ENCODE measurements at regions of chrX and their contacts with region 1.

Region 1: GRCh38 chrX:49043220-49043986 is at the start of gene TFE3:
- DNase-seq: peak; percentile 97
- H3K4me3 Mint-ChIP-seq: peak within 1 kb of the TSS; percentile 91
- H3K27ac Mint-ChIP-seq: peak within 1 kb of the TSS; percentile 92
- H3K4me1 Mint-ChIP-seq: peaks cover 30% of the 10 kb centered on the region
- H3K27me3 Mint-ChIP-seq: no peaks in the 10 kb centered on the region
- total RNA-seq, gene TFE3: 29.0 to 29.1 TPM

Region 2: DNA sequence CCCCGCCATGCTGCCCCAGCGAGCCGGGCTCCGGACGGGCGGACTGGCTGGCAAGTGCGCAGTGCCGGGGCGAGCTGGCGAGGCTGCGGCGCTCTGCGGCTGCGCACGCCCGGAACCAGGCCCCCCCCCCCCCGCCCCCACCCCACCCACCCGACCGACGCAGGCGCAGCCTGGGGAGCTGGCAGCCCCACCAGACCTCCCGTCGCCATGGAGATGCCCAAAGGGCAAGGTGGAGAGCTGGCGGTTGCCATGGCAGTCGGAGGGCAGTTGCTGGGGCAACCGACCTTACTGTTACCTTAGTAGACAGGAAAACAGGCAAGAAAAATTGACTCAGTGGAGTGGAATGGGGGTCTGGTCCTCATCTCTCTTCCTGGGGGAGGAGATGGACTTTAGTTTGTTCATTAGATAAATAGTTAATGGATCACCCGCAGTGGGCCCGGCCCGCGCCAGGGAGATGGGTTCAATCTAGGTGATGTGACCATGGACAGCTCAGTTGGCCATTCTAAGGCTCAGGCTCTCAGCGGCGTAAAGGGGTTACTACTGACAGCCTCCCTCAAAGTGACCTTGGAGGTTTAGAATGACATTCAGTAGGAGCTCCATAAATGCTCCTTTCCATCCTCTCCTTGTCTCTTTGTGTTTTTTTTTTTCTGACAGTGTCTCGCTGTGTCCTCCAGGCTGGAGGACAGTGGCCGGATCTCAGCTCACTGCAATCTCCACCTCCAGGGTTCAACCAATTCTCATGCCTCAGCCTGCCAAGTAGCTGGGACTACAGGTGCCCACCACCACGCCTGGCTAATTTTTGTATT is 207.7 kb before region 1 on chrX and contains the start of gene PCSK1N:
- CTCF ChIA-PET with region 1: no interaction called
- POLR2A ChIA-PET with region 1: no interaction called
- intact Hi-C with region 1: loop called (anchors 10 kb)
- DNase-seq: peak; percentile 39
- H3K4me3 Mint-ChIP-seq: peak within 1 kb of the TSS; percentile 80
- H3K27ac Mint-ChIP-seq: no peak within 1 kb of the TSS
- H3K4me1 Mint-ChIP-seq: peaks cover 15% of the 10 kb centered on the region
- H3K27me3 Mint-ChIP-seq: peaks cover 16% of the 10 kb centered on the region
- total RNA-seq, gene PCSK1N: 2.7 to 2.8 TPM

Region 3: GRCh38 chrX:48897621-48898306 is 145.6 kb before region 1 on chrX and contains the starts of genes PQBP1 and TIMM17B:
- CTCF ChIA-PET with region 1: interaction called, 3 read pairs
- POLR2A ChIA-PET with region 1: no interaction called
- intact Hi-C with region 1: loop called (anchors 1 kb)
- DNase-seq: peak; percentile 91
- H3K4me3 Mint-ChIP-seq: peak within 1 kb of the TSS; percentile 79
- H3K27ac Mint-ChIP-seq: peak within 1 kb of the TSS; percentile 88
- H3K4me1 Mint-ChIP-seq: peaks cover 16% of the 10 kb centered on the region
- H3K27me3 Mint-ChIP-seq: no peaks in the 10 kb centered on the region
- total RNA-seq, gene PQBP1: 85.0 to 85.5 TPM
- total RNA-seq, gene TIMM17B: 83.8 to 86.6 TPM

Region 4: DNA sequence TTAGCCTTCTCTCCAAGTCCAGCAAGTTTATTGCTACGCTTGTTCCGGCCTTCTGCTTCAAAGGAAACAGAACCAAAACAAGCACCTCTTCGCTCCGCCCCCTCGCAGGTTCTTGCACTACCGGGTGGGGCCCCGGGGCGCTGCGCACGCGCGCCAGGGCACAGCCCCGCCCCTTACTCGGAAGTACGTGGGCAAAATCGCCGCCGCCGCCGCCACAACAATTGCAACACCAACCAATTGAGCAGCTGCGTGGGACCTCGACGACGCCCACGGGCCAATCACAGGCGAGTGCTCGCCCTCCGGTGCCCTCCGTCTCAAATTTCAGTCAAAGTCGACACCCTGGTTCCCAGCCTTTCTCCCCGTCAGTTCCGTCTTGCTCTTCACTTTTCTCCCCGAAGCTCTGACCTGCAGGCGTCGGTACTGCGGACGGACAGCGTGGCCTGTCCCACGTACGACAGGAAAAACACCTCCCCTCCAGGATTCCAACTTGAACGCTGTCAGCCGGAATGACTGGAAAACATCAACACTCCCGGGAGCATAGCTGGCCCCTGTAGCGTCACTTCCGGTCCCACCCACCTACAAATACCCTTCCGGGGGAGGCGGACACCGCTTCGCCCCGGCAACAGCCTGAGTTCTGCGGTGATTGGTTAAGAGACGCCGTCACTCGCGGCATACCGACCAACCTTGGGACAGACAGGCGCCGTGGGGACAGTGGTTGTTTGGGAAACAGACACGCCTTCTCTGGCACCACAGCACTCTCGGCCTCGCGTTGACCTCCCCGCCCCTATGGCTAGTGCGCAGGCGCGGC is 85.4 kb before region 1 on chrX:
- CTCF ChIA-PET with region 1: no interaction called
- POLR2A ChIA-PET with region 1: interaction called, 3 read pairs
- intact Hi-C with region 1: loop called (anchors 1 kb)
- DNase-seq: peak; percentile 95
- H3K4me3 Mint-ChIP-seq: peak overlapping the region; percentile 99
- H3K27ac Mint-ChIP-seq: peak overlapping the region; percentile 100
- H3K4me1 Mint-ChIP-seq: peaks cover 32% of the 10 kb centered on the region
- H3K27me3 Mint-ChIP-seq: no peaks in the 10 kb centered on the region

Region 5: GRCh38 chrX:49079489-49080428 is 36.4 kb after region 1 on chrX and contains the start of gene WDR45:
- CTCF ChIA-PET with region 1: no interaction called
- POLR2A ChIA-PET with region 1: no interaction called
- intact Hi-C with region 1: no loop called
- DNase-seq: peak; percentile 84
- H3K4me3 Mint-ChIP-seq: peak within 1 kb of the TSS; percentile 94
- H3K27ac Mint-ChIP-seq: peak within 1 kb of the TSS; percentile 97
- H3K4me1 Mint-ChIP-seq: peaks cover 8% of the 10 kb centered on the region
- H3K27me3 Mint-ChIP-seq: no peaks in the 10 kb centered on the region
- total RNA-seq, gene WDR45: 23.3 to 28.9 TPM

Region 6: DNA sequence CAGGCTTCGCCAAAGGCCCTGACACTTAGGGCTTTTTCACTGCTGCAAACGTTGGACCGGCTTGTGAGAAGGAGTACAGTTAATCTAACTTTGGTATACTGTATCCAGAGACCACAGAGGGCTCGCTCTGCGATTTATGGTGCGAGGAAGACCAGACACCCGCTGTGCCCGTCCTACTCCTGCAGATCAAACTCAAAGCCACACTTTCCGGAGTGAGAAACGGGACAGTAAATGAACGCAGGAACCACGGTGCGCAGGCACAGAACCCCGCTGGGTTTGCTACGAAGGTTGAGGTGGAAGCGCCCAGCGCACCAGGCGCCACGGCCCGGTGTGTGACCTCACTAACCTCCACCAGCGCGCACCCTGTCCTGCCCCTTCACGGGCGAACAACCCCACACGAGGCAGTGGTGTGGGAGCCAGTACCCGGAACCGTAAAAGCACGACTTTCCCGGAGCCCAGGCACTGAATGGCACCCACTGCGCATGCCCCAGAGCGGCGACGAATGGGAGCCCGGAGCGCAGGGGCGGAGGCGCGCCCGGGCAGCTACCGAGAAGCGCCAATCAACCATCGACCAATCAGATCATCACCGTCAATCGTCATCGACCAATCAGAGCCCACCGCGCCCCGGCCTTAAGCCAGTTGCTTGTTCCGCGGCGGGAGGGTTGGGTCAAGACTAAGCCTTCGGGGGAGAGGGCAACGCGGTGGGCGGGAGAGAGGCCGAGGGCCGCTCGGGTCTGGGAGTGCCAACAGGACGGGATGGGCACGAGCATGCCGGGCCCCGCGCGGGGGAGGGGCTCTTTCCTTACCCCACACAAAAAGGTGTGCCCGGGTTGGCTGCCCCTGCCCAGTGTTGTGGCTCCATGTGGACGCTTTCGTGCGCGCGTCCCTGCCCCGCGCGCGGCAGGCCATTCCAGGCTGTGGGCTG is 57.6 kb after region 1 on chrX:
- CTCF ChIA-PET with region 1: no interaction called
- POLR2A ChIA-PET with region 1: no interaction called
- intact Hi-C with region 1: loop called (anchors 2 kb)
- DNase-seq: peak; percentile 93
- H3K4me3 Mint-ChIP-seq: peak overlapping the region; percentile 89
- H3K27ac Mint-ChIP-seq: peak overlapping the region; percentile 89
- H3K4me1 Mint-ChIP-seq: peaks cover 5% of the 10 kb centered on the region
- H3K27me3 Mint-ChIP-seq: no peaks in the 10 kb centered on the region

Measured in activated CD4-positive, alpha-beta memory T cell treated with anti-CD3 and anti-CD28 coated beads for 36 hours (primary cell).